Gastrocnemius medialis (tissue), 4 donors: ENCODE measurements at regions of chr10 and their contacts with region 1.

Region 1: GRCh38 chr10:32367793-32368453 is 21.0 kb upstream of the EPC1 start:
- DNase-seq: peak; percentile 41 to 56
- ATAC-seq: peak; percentile 69 to 71
- H3K4me3 ChIP-seq: peak overlapping the region; percentile 23 to 40 (median 26)
- H3K27ac ChIP-seq: peak overlapping the region; percentile 43 to 88 (median 51)
- H3K4me1 ChIP-seq: peaks cover 34 to 41% of the 10 kb centered on the region in 2 donors
- H3K27me3 ChIP-seq: no peaks in the 10 kb centered on the region
- CTCF ChIP-seq: peak; percentile 76 to 82 (median 81)
- POLR2A ChIP-seq: no peak

Region 2: DNA sequence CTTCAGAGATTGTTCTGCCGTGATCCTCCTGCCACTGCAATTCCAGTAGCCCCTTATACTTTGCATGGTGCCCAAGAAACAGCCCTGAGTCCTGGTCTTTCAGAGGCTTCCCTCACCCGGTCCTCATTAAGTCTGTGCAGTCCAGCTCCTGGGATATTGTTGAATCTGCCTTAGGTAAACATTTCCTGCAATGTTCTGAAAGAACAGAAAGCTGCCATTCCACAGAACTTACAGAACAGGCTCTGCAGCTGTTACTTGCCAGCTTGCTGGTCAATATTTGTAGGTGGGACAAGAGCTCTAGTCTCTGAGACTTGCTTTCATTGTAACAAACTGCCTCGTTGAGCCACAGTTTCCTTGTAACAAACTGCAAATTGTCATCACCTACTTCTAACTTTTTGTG is 196.7 kb before region 1 on chr10:
- in situ Hi-C with region 1: no loop called
- intact Hi-C with region 1: no loop called
- DNase-seq: no peak
- ATAC-seq: no peak
- H3K4me3 ChIP-seq: no peak overlapping the region
- H3K27ac ChIP-seq: no peak overlapping the region
- H3K4me1 ChIP-seq: no peaks in the 10 kb centered on the region
- H3K27me3 ChIP-seq: no peaks in the 10 kb centered on the region
- CTCF ChIP-seq: no peak
- POLR2A ChIP-seq: no peak

Region 3: GRCh38 chr10:32190890-32191491 is 176.9 kb before region 1 on chr10:
- in situ Hi-C with region 1: loop called in 3 of 4 experiments (anchors 5 to 10 kb)
- intact Hi-C with region 1: loop called (anchors 2 kb)
- DNase-seq: no peak
- ATAC-seq: peak in 1 of 2 donors; percentile 41
- H3K4me3 ChIP-seq: no peak overlapping the region
- H3K27ac ChIP-seq: no peak overlapping the region
- H3K4me1 ChIP-seq: no peaks in the 10 kb centered on the region
- H3K27me3 ChIP-seq: no peaks in the 10 kb centered on the region
- CTCF ChIP-seq: peak; percentile 50 to 82 (median 73)
- POLR2A ChIP-seq: no peak

Region 4: DNA sequence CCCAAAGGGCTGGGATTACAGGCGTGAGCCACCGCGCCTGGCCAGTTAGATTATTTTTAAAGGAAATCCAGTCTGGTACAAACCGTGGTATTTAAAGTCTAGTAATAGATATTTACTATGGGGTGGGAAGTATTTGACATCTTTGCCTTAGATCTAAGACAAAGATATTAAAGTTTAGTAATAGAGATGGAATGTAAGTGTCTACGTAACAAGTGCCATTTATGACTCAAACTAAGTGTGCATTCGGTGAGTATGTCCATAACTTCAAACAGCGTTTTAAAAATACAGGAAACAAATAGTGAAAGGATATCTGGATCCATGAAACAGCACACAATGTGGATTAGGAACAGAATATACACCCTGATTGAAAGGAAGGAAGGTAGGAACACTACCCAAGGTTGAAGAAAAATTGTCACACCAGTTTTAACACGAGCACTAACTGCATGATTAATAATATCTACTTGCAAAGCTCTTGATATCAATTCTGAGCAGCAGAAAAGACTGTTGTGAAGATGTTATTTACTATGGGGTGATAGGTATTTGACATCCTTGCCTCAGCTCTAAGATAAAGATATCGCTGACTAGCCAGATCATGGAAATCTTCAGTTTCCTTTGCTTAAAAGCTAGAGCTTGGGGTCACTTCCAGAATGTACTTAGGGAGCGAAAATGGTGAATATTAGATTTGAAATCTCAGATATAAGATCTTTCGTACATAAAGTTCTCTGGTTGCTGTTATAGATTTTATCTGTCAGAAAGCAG is 69.7 kb before region 1 on chr10:
- in situ Hi-C with region 1: no loop called
- intact Hi-C with region 1: no loop called
- DNase-seq: no peak
- ATAC-seq: no peak
- H3K4me3 ChIP-seq: no peak overlapping the region
- H3K27ac ChIP-seq: no peak overlapping the region
- H3K4me1 ChIP-seq: peaks cover 9 to 13% of the 10 kb centered on the region in 2 donors
- H3K27me3 ChIP-seq: no peaks in the 10 kb centered on the region
- CTCF ChIP-seq: no peak
- POLR2A ChIP-seq: no peak

Region 5: DNA sequence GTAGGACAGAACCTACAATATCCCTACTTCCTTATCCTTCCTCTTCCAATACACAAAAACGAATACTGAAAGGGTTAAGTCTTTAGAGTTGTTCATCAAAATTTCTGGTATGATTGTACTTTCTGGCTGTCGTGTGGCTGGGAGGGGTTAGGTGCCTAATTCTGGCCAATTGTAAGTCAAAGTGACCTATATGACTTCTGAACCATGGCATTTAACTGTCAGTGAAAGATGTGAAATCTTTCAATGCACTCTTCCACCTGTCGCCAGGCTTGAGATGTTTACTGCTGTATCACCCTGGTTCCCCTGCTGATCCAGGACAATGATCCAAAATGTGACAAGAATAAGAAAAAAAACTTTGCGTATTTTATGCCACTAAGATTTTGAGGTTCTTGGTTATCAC is 41.8 kb before region 1 on chr10:
- in situ Hi-C with region 1: no loop called
- intact Hi-C with region 1: no loop called
- DNase-seq: no peak
- ATAC-seq: no peak
- H3K4me3 ChIP-seq: peak overlapping the region in 1 of 4 donors; percentile 23
- H3K27ac ChIP-seq: peak overlapping the region; percentile 39 to 83 (median 50)
- H3K4me1 ChIP-seq: peaks cover 71 to 75% of the 10 kb centered on the region in 2 donors
- H3K27me3 ChIP-seq: no peaks in the 10 kb centered on the region
- CTCF ChIP-seq: no peak
- POLR2A ChIP-seq: no peak